Left ventricle myocardium inferior (tissue), 1 donor: ENCODE measurements at regions of chr12 and their contacts with region 1.

Region 1: DNA sequence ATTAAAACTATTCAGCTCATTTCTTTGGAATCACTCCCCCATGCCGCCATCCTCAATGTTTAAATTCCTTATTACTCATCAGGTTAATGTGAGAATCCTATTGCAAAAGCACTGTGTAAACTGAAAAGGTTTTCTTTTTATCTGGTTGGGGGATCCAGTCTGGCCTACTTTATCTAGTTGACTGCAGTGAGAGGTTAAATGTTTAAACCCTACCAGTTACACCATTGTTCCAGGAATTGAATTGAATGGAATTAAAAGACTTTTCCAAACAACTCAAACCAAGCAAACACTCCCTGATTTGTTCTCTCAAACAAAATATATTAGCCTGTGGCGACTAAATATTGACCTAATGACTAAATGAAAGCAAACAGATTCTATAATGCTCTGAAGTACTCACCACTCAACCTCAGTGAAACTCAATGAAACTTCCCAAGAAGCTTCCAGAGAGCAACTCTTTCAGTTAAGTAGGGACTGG is 100.5 kb downstream of the VEZT start:
- DNase-seq: no peak
- H3K4me3 ChIP-seq: no peak overlapping the region
- H3K27ac ChIP-seq: no peak overlapping the region
- H3K4me1 ChIP-seq: no peaks in the 10 kb centered on the region
- H3K27me3 ChIP-seq: no peaks in the 10 kb centered on the region
- CTCF ChIP-seq: no peak

Region 2: DNA sequence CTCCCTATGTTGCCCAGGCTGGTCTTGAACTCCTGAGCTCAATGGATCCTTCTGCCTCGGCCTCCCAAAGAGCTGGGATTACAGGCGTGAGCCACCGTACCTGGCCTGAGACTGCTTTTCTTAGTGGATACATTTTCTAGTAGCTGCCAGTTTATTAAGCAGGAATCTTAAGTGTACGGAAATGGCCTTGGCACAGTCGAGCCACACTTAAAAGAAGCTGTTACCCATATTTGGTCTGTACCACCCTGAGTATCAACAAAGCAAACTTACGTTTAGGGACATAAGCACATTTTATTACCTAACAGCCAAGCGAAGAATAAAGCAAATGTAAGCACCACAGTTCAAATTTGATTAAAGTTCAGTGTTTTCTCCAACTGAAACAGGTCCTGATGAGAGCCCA is 194.0 kb before region 1 on chr12:
- intact Hi-C with region 1: loop called (anchors 10 kb)
- DNase-seq: no peak
- H3K4me3 ChIP-seq: no peak overlapping the region
- H3K27ac ChIP-seq: no peak overlapping the region
- H3K4me1 ChIP-seq: no peaks in the 10 kb centered on the region
- H3K27me3 ChIP-seq: no peaks in the 10 kb centered on the region
- CTCF ChIP-seq: no peak